Dendritic cell treated with granulocyte-macrophage colony-stimulating factor and Interleukin-4, amounts not matched to agents 40 ng/mL and 50 ng/mL, for 4 days (primary cell): ENCODE measurements at regions of chr20 and their contacts with region 1.

Region 1: GRCh38 chr20:833450-834150 is at the start of gene FAM110A:
- H3K4me3 Mint-ChIP-seq: peak within 1 kb of the TSS; percentile 96
- H3K27ac Mint-ChIP-seq: peak within 1 kb of the TSS; percentile 96
- H3K4me1 Mint-ChIP-seq: peaks cover 53% of the 10 kb centered on the region
- H3K27me3 Mint-ChIP-seq: no peaks in the 10 kb centered on the region

Region 2: GRCh38 chr20:891058-891705 is 57.6 kb after region 1 on chr20:
- intact Hi-C with region 1: no loop called
- H3K4me3 Mint-ChIP-seq: peak overlapping the region; percentile 20
- H3K27ac Mint-ChIP-seq: peak overlapping the region; percentile 47
- H3K4me1 Mint-ChIP-seq: peaks cover 57% of the 10 kb centered on the region
- H3K27me3 Mint-ChIP-seq: peaks cover 5% of the 10 kb centered on the region

Region 3: DNA sequence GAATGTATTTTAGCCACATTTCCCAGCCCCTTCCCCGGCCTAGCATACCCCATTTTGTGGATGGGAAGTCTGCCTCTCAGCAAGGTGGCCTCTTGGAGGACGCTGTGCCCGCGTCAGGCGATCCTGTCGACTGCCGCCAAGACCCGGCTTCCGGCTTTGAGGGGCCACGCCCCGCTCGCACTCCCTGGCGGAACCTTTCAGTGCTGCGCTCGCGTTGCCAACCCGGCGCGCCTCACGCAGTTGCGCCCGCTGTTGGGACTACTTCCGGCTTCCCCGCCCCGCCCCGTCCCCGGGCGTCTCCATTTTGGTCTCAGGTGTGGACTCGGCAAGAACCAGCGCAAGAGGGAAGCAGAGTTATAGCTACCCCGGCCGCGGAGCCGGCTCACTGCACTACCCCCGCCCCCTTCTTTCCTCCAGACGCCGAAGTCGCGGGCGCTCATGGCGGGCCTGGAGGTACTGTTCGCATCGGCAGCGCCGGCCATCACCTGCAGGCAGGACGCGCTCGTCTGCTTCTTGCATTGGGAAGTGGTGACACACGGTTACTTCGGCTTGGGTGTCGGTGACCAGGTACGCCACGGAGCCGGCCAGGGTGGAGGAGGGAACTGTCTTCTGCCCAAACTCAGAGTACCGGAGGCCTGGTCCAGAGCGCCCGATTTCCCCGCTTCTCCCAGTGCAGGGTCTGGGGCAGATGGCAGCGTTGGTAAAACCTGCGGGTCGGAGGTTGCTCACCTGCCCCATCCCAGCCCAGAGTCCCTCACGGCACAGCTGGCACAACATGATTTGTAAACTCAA is 284.9 kb after region 1 on chr20 and contains the start of gene PSMF1:
- intact Hi-C with region 1: loop called (anchors 5 kb)
- H3K4me3 Mint-ChIP-seq: peak within 1 kb of the TSS; percentile 87
- H3K27ac Mint-ChIP-seq: peak within 1 kb of the TSS; percentile 71
- H3K4me1 Mint-ChIP-seq: peaks cover 64% of the 10 kb centered on the region
- H3K27me3 Mint-ChIP-seq: no peaks in the 10 kb centered on the region